BJ (cell line): ENCODE measurements at regions of chr9 and their contacts with region 1.

Region 1: GRCh38 chr9:130866474-130866965 is 30.1 kb downstream of the QRFP start:
- DNase-seq: no peak
- H3K4me3 ChIP-seq: no peak overlapping the region
- H3K27me3 ChIP-seq: no peaks in the 10 kb centered on the region
- CTCF ChIP-seq: peak; percentile 90

Region 2: DNA sequence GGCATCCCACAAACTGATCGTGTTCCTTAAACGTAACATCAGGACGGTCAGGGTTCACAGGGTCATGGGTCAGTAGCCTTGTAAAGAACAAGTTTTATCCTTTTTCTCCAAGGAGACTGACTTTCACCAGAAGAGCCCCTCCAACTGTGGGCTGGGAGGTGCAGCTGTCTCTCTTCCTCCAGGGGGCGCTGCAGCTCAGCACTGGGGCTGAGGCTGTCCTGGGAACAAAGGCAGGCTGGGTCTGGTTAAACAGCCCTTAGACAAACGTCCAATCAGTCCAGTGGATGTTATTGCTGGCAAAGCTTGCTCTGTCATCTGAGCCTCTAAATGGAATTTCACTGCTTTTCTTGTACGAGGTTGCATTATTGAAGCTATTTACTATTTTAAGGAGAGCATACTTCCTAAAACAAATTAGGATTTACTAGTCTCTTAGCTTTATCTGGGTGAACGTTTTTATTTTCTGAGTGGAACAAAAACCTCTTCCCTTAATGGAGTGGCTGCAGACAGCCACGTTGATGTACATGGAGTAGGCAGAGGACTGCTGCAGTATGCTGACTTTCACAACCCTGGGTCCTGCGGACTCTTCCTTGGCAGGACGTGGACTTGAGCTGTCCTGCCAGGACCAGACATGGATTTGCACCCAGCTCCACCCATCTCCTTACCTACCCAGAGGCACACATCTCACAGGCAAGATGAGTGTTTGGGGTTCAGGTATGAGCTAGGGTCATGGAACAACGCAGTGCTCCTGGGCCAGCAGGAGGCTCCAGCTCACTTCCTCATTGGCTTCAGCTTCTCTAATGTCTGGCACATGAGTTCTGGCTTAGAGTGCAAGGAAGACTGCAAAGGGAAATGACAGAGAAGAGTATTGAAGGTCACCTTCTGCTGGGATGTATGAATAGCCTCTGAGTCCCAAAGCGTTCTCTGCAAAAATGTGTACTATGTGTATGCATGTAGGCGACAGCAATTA is 165.2 kb before region 1 on chr9:
- CTCF ChIA-PET with region 1: interaction called, 251 read pairs
- POLR2A ChIA-PET with region 1: no interaction called
- DNase-seq: no peak
- H3K4me3 ChIP-seq: no peak overlapping the region
- H3K27me3 ChIP-seq: no peaks in the 10 kb centered on the region
- CTCF ChIP-seq: peak; percentile 99

Region 3: GRCh38 chr9:130842545-130842944 is 24.0 kb before region 1 on chr9:
- CTCF ChIA-PET with region 1: interaction called, 19 read pairs
- POLR2A ChIA-PET with region 1: no interaction called
- DNase-seq: no peak
- H3K4me3 ChIP-seq: no peak overlapping the region
- H3K27me3 ChIP-seq: no peaks in the 10 kb centered on the region
- CTCF ChIP-seq: no peak

Region 4: DNA sequence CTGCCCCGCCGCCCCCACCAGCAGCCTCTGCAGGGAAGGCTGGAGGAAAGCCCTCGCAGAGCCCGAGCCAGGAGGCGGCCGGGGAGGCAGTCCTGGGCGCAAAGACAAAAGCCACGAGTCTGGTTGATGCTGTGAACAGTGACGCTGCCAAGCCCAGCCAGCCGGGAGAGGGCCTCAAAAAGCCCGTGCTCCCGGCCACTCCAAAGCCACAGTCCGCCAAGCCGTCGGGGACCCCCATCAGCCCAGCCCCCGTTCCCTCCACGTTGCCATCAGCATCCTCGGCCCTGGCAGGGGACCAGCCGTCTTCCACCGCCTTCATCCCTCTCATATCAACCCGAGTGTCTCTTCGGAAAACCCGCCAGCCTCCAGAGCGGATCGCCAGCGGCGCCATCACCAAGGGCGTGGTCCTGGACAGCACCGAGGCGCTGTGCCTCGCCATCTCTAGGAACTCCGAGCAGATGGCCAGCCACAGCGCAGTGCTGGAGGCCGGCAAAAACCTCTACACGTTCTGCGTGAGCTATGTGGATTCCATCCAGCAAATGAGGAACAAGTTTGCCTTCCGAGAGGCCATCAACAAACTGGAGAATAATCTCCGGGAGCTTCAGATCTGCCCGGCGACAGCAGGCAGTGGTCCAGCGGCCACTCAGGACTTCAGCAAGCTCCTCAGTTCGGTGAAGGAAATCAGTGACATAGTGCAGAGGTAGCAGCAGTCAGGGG is 18.6 kb after region 1 on chr9:
- CTCF ChIA-PET with region 1: interaction called, 19 read pairs
- POLR2A ChIA-PET with region 1: no interaction called
- DNase-seq: no peak
- H3K4me3 ChIP-seq: no peak overlapping the region
- H3K27me3 ChIP-seq: no peaks in the 10 kb centered on the region
- CTCF ChIP-seq: no peak

Region 5: DNA sequence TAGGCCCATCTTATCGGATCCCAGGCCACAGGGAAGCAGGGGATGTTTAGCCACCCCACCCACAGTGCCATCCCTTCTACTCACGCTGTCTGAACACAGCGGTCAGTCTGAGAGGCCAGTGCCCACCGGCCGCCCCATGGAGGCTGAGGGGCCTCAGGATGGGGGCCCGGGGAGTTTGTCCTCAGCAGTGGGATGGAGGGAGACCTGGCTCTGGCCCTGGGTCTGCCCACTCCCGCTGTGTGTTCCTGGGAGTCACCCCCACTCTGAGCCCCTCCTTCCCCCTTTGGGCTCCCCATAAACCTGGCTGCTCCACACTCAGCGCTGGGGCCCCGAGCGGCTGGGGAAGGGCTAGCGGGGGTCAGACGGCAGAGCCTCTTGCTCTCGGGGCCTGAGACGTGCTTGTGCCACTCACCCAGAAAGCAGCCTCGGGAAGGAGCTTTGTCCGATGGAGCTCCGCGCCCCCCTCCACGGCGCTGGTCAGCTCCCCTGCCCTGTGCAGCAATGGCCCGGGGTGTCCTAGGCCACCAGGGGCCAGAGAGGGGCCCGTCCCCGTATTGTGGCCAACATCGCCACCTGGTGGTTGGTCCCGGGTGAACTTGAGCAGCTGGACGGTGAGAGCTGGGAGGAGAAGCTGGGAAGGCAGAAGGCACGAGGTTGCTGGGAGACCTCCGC is 131.5 kb after region 1 on chr9:
- CTCF ChIA-PET with region 1: interaction called, 36 read pairs
- POLR2A ChIA-PET with region 1: no interaction called
- DNase-seq: no peak
- H3K4me3 ChIP-seq: no peak overlapping the region
- H3K27me3 ChIP-seq: peaks cover 19% of the 10 kb centered on the region
- CTCF ChIP-seq: peak; percentile 80

Region 6: GRCh38 chr9:131167146-131167692 is 300.7 kb after region 1 on chr9:
- CTCF ChIA-PET with region 1: no interaction called
- POLR2A ChIA-PET with region 1: no interaction called
- DNase-seq: no peak
- H3K4me3 ChIP-seq: no peak overlapping the region
- H3K27me3 ChIP-seq: no peaks in the 10 kb centered on the region
- CTCF ChIP-seq: no peak

Region 7: DNA sequence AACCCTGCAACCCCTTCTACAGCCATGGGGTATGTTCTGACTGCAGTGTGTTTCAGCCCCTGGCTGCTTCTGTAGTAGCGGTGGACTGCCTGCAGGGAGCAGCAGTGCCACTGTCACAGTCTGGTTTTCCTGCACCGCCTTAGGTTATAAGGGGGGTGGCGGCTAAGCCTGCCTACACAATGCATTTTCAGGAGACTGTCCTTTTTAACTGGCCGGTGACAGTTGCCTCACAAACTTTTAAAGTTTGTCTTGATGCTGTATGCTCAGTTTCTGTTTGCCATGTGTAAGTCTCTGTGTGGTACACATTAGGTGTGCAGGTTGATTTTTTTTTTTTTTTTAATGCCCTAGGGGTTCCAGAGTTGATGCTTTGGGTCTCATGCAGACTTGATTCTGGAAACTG is 311.9 kb after region 1 on chr9:
- CTCF ChIA-PET with region 1: no interaction called
- POLR2A ChIA-PET with region 1: no interaction called
- DNase-seq: no peak
- H3K4me3 ChIP-seq: no peak overlapping the region
- H3K27me3 ChIP-seq: no peaks in the 10 kb centered on the region
- CTCF ChIP-seq: peak; percentile 92